Right ventricle myocardium inferior (tissue), 1 donor: ENCODE measurements at regions of chr17 and their contacts with region 1.

Region 1: GRCh38 chr17:61208301-61209105 is 191.1 kb upstream of the TBX2 start:
- DNase-seq: no peak
- ATAC-seq: peak; percentile 44

Region 2: DNA sequence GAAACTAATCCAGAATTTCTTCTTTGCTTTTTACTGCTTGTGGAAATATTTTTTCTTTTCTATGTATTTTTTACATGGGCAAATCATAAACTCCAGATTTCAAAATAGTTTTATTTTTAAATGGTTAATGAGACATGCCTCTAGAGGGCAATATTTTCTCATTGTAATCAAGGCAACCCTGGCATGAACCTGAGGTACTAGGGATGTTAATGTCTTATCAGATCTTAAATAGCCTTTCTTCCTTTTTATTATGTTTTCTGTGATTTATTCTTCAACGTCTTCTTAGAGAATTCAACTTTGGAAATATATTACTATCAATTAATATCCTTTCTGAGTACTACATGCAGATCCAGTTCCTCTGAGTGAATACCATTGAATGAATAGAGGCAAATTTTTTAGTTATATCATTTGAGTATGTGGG is 206.2 kb before region 1 on chr17:
- intact Hi-C with region 1: loop called (anchors 5 kb)
- DNase-seq: no peak
- ATAC-seq: no peak

Region 3: GRCh38 chr17:61128661-61129115 is 79.8 kb before region 1 on chr17:
- intact Hi-C with region 1: no loop called
- DNase-seq: no peak
- ATAC-seq: peak; percentile 50

Region 4: DNA sequence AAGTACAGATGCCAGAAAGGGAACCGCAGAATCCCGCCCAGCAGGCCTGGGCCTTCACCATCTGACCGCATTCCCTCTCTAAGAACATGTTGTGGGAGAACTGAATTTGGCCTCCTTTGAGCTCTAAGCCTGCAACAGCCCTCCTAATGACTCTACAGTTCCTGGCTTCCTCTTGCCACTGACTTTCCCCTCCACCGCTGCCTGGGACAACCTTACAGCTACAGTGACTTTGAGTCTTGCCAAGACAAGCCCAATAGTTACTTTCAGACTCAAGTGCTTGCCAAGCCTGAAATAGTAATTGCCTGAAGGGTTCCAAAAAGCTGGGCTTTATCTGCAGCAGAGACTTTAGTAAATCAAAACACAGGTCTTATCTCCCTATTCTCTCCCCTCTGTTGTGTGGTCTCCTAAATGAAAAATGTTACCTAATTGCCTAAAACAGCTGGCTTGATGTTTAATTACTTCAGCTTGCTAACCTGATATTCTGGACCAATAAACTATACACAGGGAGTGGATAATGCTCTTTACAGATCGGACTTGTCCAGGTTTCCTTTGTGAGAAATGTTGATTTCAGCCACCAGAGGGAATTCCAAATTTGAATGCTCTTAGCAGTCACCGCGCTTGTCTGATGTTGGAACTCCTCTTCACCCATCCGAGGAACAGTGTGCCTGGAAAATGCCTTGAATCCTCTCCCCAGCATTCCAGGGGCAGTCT is 106.0 kb after region 1 on chr17:
- intact Hi-C with region 1: loop called (anchors 10 kb)
- DNase-seq: peak; percentile 71
- ATAC-seq: peak; percentile 95